ENCODE measurements at regions of chr20 and their contacts with region 1.

Region 1: DNA sequence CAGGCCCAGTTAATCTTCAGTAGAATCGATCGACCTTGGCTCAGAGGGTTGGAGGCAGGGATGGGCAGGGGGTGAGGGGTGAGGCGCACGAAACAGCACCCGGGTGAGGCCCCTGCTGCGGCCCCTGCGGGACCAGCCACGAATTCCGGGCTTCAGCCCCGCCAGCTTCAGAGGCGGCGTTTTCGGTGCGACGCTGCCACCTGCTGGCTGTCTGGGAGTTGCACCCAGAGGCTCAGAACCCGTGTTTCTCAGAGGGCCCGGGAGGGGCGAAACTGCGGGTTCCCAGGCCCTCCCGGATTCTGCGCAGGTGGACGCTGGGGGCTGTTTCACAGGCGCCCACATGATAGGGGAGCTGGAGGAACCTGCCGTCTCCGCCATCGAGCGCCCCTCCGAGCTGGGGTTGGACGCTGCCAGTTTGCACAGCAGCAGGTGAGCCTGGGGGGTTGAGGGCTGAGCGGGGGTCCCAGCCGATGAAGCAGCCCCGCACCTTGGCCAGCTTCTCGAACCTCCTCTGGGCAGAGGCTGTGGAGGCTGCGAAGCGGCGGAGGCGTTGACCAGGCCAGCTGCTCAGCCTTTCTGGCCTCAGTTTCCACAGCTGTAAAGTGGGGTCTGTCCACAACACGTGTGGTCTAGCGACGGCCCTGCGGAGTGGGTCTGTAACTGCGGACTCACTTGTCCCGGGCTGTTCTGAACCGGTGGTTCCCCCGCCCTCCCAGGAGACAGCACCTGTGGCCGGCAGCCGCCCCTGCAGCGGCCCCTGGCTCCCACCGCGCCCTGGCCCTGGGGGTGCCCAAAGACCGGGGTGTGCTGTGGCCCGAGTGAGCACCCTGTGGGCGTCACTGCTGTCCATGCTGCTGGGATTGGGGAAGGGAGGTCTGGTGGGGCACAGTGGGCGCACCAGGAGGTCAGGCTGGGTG is 2.5 kb upstream of the BHLHE23 start:
- DNase-seq: peak; percentile 86
- H3K4me3 Mint-ChIP-seq: no peak overlapping the region
- H3K27ac Mint-ChIP-seq: no peak overlapping the region
- H3K4me1 Mint-ChIP-seq: peaks cover 27% of the 10 kb centered on the region
- H3K27me3 Mint-ChIP-seq: peaks cover 51% of the 10 kb centered on the region

Region 2: DNA sequence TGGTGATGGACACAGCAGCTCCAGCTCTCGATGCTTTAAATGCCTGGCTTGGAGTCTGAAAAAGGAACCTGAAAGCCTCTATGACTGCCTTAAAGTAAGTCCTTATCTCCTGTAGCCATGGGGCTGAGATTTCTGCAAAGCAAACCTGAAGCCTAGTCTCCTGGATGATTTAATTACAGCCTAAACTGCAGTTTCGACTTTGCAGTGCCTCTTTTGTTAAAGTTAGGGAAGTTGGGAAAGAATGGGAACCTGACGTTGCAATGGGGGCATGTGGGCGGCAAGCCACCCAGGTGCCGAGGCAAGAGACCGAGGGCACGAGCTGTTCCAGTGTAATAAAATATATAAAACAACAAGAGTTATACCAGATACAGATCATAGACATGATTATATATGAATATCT is 136.0 kb before region 1 on chr20:
- CTCF ChIA-PET with region 1: interaction called, 9 read pairs
- intact Hi-C with region 1: loop called (anchors 1 kb)
- DNase-seq: no peak
- H3K4me3 Mint-ChIP-seq: no peak overlapping the region
- H3K27ac Mint-ChIP-seq: no peak overlapping the region
- H3K4me1 Mint-ChIP-seq: peaks cover 17% of the 10 kb centered on the region
- H3K27me3 Mint-ChIP-seq: no peaks in the 10 kb centered on the region

Region 3: GRCh38 chr20:62972270-62973032 is 36.9 kb before region 1 on chr20:
- CTCF ChIA-PET with region 1: interaction called, 12 read pairs
- intact Hi-C with region 1: loop called (anchors 1 kb)
- DNase-seq: peak; percentile 91
- H3K4me3 Mint-ChIP-seq: no peak overlapping the region
- H3K27ac Mint-ChIP-seq: no peak overlapping the region
- H3K4me1 Mint-ChIP-seq: peaks cover 12% of the 10 kb centered on the region
- H3K27me3 Mint-ChIP-seq: peaks cover 29% of the 10 kb centered on the region

Region 4: DNA sequence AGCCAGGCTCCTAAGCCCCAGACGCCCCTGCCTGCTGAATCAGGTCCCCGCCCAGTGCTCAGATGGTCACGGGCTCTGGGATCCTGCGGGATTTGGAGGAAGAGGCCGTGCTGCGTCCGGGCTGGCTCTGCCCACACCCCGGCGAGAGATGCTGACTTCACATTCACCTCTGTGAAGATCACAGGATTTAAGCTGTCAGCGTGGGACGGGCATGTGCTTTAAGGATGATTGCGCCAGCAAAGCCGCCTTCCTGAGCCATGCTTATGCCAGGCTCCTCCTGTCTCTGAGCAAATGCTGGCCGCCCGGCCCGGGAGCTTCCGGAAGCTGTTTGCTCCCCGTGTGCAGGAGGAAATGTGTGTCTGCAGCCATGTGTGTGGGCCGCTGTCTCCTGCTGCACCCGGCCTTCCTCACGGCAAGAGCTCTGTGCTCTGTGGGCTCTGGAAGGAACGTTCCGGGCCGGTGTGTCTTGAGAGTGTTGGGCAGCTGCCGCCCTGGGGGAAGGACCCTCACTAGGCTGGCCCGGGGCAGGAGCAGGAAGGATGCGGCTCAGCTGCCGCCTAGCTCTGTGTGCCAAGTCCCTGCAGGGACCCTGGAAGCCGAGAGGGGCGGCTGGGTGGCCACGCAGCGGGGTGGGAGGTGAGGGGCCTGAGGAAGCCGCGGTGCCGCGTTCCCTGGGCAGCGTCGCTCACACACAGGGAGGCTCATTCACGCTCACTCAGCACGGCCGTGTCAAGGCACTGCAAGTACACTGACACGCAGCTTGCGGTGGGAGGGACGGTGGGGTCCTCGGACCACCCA is 16.4 kb after region 1 on chr20:
- CTCF ChIA-PET with region 1: no interaction called
- intact Hi-C with region 1: loop called (anchors 2 kb)
- DNase-seq: peak; percentile 71
- H3K4me3 Mint-ChIP-seq: peak overlapping the region; percentile 21
- H3K27ac Mint-ChIP-seq: no peak overlapping the region
- H3K4me1 Mint-ChIP-seq: peaks cover 15% of the 10 kb centered on the region
- H3K27me3 Mint-ChIP-seq: peaks cover 8% of the 10 kb centered on the region

Region 5: DNA sequence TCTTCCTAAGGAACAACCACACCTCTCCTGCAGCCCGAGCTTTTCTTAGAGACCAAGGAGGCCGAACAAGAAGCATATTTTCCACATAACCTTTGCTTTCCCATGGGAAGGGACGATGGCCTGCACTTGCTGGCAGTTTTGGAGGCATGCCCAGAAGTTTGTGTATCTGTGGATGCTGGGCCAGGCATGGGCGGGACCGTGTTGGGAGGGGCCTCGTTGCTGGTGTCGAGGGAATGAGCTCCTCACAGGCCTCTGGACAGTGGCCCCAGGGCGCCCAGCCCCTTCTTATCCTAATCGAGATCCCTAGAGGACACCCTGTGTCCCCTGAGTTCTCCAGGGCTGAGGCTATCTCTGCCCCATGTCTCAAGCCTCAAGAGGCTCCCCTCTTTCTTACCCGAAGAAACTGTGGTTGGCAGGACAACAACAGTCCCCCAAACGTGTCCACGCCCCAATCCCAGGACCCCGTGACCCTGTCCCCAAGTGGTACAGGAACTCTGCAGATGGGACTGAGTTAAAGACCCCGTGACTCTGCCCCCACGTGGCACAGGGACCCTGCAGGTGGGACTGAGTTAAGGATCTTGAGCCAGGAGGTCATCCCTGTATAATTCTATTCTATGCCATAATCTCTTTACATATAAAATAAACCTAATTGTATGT is 96.9 kb after region 1 on chr20:
- CTCF ChIA-PET with region 1: no interaction called
- intact Hi-C with region 1: no loop called
- DNase-seq: no peak
- H3K4me3 Mint-ChIP-seq: no peak overlapping the region
- H3K27ac Mint-ChIP-seq: no peak overlapping the region
- H3K4me1 Mint-ChIP-seq: peaks cover 5% of the 10 kb centered on the region
- H3K27me3 Mint-ChIP-seq: no peaks in the 10 kb centered on the region